ENCODE measurements at regions of chr19 and their contacts with region 1.

Region 1: DNA sequence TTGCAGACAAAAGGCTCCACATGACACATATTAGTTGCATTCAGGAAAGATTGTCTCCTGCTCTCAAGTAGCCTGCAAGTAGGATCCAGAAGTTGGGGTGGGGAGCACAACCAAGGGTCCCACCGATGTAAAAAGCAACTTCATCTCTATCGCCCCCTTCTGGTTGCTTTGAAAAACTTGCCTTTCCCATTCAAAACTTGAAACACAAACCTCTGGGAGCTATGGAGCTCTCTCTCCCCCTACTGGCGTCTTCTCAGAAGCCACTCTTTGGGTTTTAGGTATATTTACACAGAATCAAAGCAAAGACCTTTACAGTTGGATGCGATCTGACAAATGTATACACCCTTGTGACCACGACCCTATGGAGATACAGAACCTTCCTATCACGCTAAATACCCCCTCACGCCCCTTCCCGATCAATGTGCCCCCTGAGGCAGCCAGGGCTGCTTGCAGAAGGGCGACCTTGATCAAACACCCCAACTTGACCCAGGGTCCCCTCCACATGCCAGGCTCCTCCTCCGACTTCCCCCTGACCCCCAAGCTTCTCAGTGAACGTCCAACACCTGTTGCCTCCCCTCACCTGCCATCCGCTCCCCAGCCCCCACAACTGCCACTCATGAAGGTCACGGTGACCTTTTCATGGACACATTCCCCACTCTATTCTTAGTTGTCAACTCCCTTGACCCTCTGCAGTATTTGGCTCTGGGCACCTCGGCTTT is 10.1 kb downstream of the NOSIP start:
- DNase-seq: peak in 8 of 9 experiments; percentile 54 to 94 (median 74)
- ATAC-seq: peak; percentile 36
- H3K4me3 ChIP-seq: no peak overlapping the region
- H3K4me3 Mint-ChIP-seq: peak overlapping the region; percentile 68
- H3K27ac ChIP-seq: no peak overlapping the region
- H3K27ac Mint-ChIP-seq: peak overlapping the region; percentile 89
- H3K4me1 ChIP-seq: peaks cover 59% of the 10 kb centered on the region
- H3K4me1 Mint-ChIP-seq: peaks cover 49% of the 10 kb centered on the region
- H3K27me3 ChIP-seq: no peaks in the 10 kb centered on the region
- H3K27me3 Mint-ChIP-seq: no peaks in the 10 kb centered on the region
- CTCF ChIP-seq: peak; percentile 100

Region 2: DNA sequence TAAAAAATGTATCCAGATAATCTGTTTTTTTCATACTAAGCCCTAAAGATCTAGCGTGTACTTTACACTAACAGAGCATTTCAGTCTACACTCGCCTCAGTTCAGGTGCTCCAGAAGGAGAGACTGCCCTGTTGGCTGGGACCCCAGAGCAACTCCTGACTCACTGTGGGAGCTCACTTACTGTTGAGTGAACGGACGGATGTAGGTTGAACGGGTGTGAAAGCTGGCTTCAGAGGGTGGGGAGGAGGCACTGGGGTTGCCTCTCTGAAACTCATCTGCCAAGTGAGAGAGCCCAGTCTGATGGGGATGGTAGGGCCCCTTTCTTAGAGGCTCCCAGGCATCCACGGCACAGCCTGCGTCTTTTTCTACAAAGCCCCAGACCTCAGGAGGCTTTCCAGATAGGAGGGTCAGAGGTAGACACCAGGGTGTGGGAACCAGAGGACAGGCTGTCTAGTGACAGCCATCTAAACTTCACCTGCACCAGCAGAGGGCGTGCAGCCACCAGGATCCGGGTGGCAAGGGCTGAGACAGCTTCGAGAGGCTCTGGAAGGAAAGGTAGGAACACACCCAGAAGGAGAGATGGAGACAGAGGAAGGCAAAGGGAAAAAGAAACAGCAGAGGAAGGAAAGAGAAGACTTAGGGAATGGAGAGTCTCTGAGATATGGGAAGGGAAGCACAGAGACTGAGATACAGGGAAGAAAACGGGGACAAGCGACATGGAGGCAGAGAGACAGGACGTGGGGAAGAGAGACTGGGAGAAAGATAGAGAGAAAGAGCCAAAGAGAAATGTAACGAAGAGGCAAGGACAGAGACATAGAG is 178.5 kb before region 1 on chr19:
- CTCF ChIA-PET with region 1: interaction called, 9 read pairs
- POLR2A ChIA-PET with region 1: no interaction called
- intact Hi-C with region 1: loop called (anchors 1 kb)
- DNase-seq: peak; percentile 61 to 89 (median 81)
- ATAC-seq: peak; percentile 80
- H3K4me3 ChIP-seq: no peak overlapping the region
- H3K4me3 Mint-ChIP-seq: no peak overlapping the region
- H3K27ac ChIP-seq: peak overlapping the region in 1 of 2 experiments; percentile 20
- H3K27ac Mint-ChIP-seq: peak overlapping the region; percentile 46
- H3K4me1 ChIP-seq: peaks cover 16% of the 10 kb centered on the region
- H3K4me1 Mint-ChIP-seq: peaks cover 11% of the 10 kb centered on the region
- H3K27me3 ChIP-seq: no peaks in the 10 kb centered on the region
- H3K27me3 Mint-ChIP-seq: no peaks in the 10 kb centered on the region
- CTCF ChIP-seq: peak; percentile 95

Region 3: GRCh38 chr19:49497047-49497788 is 73.1 kb before region 1 on chr19:
- CTCF ChIA-PET with region 1: interaction called, 27 read pairs
- POLR2A ChIA-PET with region 1: interaction called, 11 read pairs
- intact Hi-C with region 1: no loop called
- DNase-seq: peak; percentile 54 to 91 (median 78)
- ATAC-seq: peak; percentile 9
- H3K4me3 ChIP-seq: peak overlapping the region; percentile 95 to 96
- H3K4me3 Mint-ChIP-seq: peak overlapping the region; percentile 100
- H3K27ac ChIP-seq: peak overlapping the region; percentile 95 to 98
- H3K27ac Mint-ChIP-seq: peak overlapping the region; percentile 98
- H3K4me1 ChIP-seq: peaks cover 39% of the 10 kb centered on the region
- H3K4me1 Mint-ChIP-seq: peaks cover 59% of the 10 kb centered on the region
- H3K27me3 ChIP-seq: no peaks in the 10 kb centered on the region
- H3K27me3 Mint-ChIP-seq: no peaks in the 10 kb centered on the region
- CTCF ChIP-seq: no peak

Region 4: GRCh38 chr19:49520705-49521319 is 49.5 kb before region 1 on chr19:
- CTCF ChIA-PET with region 1: interaction called, 28 read pairs
- POLR2A ChIA-PET with region 1: interaction called, 4 read pairs
- intact Hi-C with region 1: no loop called
- DNase-seq: no peak
- ATAC-seq: no peak
- H3K4me3 ChIP-seq: no peak overlapping the region
- H3K4me3 Mint-ChIP-seq: no peak overlapping the region
- H3K27ac ChIP-seq: no peak overlapping the region
- H3K27ac Mint-ChIP-seq: no peak overlapping the region
- H3K4me1 ChIP-seq: no peaks in the 10 kb centered on the region
- H3K4me1 Mint-ChIP-seq: peaks cover 5% of the 10 kb centered on the region
- H3K27me3 ChIP-seq: no peaks in the 10 kb centered on the region
- H3K27me3 Mint-ChIP-seq: no peaks in the 10 kb centered on the region
- CTCF ChIP-seq: no peak

Region 5: DNA sequence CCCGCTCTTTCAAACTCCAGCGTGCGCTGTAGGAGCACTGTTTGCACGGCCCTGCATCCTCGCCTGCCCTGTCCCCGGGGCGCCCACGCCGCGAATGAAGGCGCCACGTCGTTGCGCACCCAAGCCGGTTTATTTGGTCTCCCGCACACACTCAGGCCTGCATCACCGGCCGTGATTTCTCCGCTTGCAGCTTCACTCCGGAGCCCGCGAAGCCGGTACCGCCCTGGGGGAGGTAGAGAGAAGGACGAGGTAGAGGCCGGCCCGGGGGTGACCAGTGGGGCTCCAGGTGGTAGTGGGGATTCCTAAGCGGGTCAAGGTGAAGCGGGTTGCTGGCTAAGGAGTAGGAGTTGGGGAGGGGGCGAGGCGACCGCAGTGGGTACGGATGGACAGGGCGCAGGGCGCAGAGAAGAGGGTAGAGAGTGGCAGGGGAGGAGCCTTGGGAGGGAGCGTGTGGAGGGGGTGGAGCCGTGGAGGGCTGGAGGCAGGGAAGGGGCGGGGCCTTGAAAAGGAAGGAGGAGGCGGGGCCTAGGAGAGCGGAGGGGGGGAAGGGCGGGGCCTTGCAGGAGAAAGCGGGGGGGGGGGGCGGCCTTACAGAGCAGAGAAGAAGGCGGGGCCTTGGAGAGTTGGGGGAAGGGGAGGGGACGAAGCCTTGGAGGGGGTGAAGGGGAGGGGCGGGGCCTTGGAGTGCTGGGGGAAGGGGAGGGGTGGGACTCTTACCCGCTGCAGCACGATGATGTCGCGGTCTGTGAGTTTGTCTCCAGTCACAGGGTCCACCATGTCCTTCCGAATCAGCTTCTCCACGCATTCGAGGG is 14.5 kb before region 1 on chr19:
- CTCF ChIA-PET with region 1: interaction called, 601 read pairs
- POLR2A ChIA-PET with region 1: interaction called, 50 read pairs
- intact Hi-C with region 1: loop called (anchors 1 kb)
- DNase-seq: peak; percentile 66 to 90 (median 77)
- ATAC-seq: peak; percentile 75
- H3K4me3 ChIP-seq: peak overlapping the region; percentile 59 to 78
- H3K4me3 Mint-ChIP-seq: peak overlapping the region; percentile 58
- H3K27ac ChIP-seq: peak overlapping the region; percentile 28 to 34
- H3K27ac Mint-ChIP-seq: peak overlapping the region; percentile 95
- H3K4me1 ChIP-seq: peaks cover 88% of the 10 kb centered on the region
- H3K4me1 Mint-ChIP-seq: peaks cover 74% of the 10 kb centered on the region
- H3K27me3 ChIP-seq: no peaks in the 10 kb centered on the region
- H3K27me3 Mint-ChIP-seq: no peaks in the 10 kb centered on the region
- CTCF ChIP-seq: no peak